ENCODE measurements at regions of chr10 and their contacts with region 1.

Region 1: GRCh38 chr10:132354356-132355094 is 22.5 kb downstream of the LRRC27 start:
- DNase-seq: no peak
- H3K4me3 ChIP-seq: no peak overlapping the region
- H3K27ac ChIP-seq: no peak overlapping the region
- H3K4me1 ChIP-seq: no peaks in the 10 kb centered on the region
- H3K27me3 ChIP-seq: no peaks in the 10 kb centered on the region
- CTCF ChIP-seq: no peak
- POLR2A ChIP-seq: no peak

Region 2: DNA sequence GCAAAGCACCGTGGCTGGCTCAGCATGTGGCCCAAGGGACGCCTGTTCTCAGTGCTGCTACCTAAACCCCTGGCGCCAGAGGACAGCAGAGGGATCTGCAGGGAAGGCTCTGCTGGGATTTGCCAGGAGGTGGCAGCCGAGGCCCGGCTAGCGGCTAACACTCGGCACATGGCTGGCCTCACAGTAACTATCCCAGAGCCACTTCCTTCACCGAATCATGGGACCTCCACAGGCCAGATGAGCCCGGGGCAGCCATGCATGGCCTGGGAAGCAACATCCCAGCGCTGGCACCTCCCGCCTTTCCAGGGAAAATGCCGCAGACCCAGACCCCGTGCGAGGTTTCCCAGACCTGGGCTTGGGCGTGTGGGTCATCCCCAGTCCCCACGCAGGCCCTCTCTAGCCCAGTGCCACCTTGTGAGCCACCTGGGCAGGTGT is 131.4 kb before region 1 on chr10:
- intact Hi-C with region 1: loop called (anchors 5 kb)
- DNase-seq: no peak
- H3K4me3 ChIP-seq: no peak overlapping the region
- H3K27ac ChIP-seq: no peak overlapping the region
- H3K4me1 ChIP-seq: peaks cover 5% of the 10 kb centered on the region
- H3K27me3 ChIP-seq: no peaks in the 10 kb centered on the region
- CTCF ChIP-seq: peak; percentile 64 to 80 (median 70)
- POLR2A ChIP-seq: no peak

Region 3: DNA sequence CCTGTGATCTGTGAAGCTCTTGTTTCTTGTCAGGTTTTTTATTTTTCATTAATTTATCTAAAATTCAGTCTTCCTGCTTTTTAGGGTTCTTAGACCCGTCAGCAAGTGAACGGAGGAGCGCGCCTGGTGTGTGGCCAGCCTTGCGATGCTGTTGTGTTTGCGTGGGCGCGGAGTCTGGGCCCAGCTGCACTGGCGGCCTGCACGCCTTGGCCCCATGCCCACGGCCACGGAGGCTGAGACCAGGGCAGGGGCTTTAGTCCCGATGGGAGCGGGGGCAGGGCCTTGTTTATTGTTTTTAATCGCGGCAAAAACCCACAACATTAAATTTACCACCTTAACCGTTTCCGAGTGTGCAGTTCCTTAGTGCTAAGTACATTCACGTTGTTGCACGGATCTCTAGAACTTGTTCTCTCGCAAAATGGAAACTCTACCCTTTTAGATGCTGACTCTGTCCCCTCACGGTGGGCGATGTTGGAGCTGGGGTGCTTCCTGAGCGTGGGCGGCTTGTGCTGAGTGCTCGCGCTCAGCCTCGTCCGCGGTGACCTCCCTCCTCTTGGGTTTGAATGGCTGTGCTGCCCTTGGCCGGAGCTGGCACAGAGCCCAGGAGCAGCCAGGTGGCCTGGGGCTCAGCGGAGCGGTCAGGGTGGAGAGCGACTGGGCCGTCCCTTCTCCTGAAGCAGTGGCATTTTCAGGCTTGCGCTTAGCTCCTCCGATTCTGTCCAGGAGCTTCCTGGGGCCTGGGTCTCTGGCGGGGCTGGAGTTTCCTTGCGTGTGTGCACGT is 252.2 kb after region 1 on chr10:
- intact Hi-C with region 1: no loop called
- DNase-seq: no peak
- H3K4me3 ChIP-seq: peak overlapping the region in 1 of 2 donors; percentile 26
- H3K27ac ChIP-seq: no peak overlapping the region
- H3K4me1 ChIP-seq: peaks cover 36% of the 10 kb centered on the region
- H3K27me3 ChIP-seq: no peaks in the 10 kb centered on the region
- CTCF ChIP-seq: no peak
- POLR2A ChIP-seq: no peak

Measured in vagina (tissue), 2 donors.